ENCODE measurements at regions of chr6 and their contacts with region 1.

Region 1: GRCh38 chr6:155240905-155241600 is 22.8 kb upstream of the CLDN20 start:
- DNase-seq: no peak
- ATAC-seq: no peak

Region 2: GRCh38 chr6:154986787-154987235 is 254.2 kb before region 1 on chr6:
- intact Hi-C with region 1: no loop called
- DNase-seq: no peak
- ATAC-seq: no peak

Region 3: GRCh38 chr6:155194399-155194798 is 46.7 kb before region 1 on chr6:
- intact Hi-C with region 1: loop called (anchors 5 kb)
- DNase-seq: no peak
- ATAC-seq: no peak

Region 4: DNA sequence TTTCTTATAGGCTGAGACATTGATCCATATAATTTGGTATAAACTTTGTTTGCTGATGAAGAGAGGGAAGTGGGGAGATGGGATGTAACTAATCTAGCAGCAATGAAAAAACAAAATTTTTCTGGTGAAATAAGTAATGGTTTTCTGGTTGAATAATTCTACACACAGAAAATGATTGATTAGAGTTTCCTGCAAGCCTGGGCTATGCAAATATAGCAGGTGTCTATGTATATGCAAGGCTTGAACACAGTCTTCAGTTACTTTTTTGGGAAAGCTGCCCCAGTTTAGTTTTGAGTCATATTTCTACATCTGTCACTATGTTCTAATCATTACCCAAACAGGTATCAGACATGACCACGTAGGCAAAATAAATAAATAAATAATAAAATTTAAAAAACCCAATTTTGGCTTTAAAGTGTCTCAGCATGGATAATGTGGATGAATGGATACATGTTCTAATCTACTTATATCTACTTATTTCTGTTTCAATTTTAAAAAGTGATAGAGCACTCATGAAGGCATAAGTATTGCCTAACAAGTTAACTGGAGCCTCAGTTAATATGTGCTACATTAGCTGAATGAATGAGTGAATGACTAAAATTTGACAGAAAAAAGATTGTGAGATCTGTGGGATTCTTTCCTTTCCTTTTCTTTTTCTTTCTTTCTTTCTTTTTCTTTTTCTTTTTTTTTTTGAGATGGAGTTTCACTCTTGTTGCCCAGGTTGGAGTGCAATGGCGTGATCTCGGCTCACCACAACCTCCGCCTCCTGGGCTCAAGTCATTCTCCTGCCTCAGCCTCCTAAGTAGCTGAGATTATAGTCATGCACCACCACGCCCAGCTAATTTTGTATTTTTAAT is 110.4 kb after region 1 on chr6:
- intact Hi-C with region 1: no loop called
- DNase-seq: no peak
- ATAC-seq: no peak

Measured in Right ventricle myocardium superior (tissue), 1 donor.